Mucosa of descending colon (tissue), 3 donors: ENCODE measurements at regions of chr1 and their contacts with region 1.

Region 1: GRCh38 chr1:109548321-109549267 is at the start of gene GNAI3:
- DNase-seq: peak; percentile 98 to 99 (median 99)
- ATAC-seq: peak; percentile 98
- H3K4me3 ChIP-seq: peak within 1 kb of the TSS; percentile 65
- H3K4me1 ChIP-seq: peaks cover 43% of the 10 kb centered on the region
- CTCF ChIP-seq: no peak
- total RNA-seq, gene GNAI3: 6.5 to 8.3 (median 7.6) TPM

Region 2: GRCh38 chr1:109630081-109630897 is 81.7 kb after region 1 on chr1:
- intact Hi-C with region 1: loop called in 1 of 2 experiments (anchors 10 kb)
- DNase-seq: peak in 1 of 3 donors; percentile 43
- ATAC-seq: no peak
- H3K4me3 ChIP-seq: no peak overlapping the region
- H3K4me1 ChIP-seq: peaks cover 7% of the 10 kb centered on the region
- CTCF ChIP-seq: no peak

Region 3: GRCh38 chr1:109643385-109644230 is 95.0 kb after region 1 on chr1:
- intact Hi-C with region 1: loop called (anchors 5 to 10 kb)
- DNase-seq: peak; percentile 87 to 94 (median 93)
- ATAC-seq: peak; percentile 94
- H3K4me3 ChIP-seq: no peak overlapping the region
- H3K4me1 ChIP-seq: peaks cover 7% of the 10 kb centered on the region
- CTCF ChIP-seq: peak; percentile 85

Region 4: GRCh38 chr1:109762821-109763645 is 214.4 kb after region 1 on chr1:
- intact Hi-C with region 1: loop called in 1 of 2 experiments (anchors 10 kb)
- DNase-seq: peak; percentile 55 to 68 (median 59)
- ATAC-seq: peak; percentile 66
- H3K4me3 ChIP-seq: peak overlapping the region; percentile 55
- H3K4me1 ChIP-seq: peaks cover 32% of the 10 kb centered on the region
- CTCF ChIP-seq: no peak

Region 5: GRCh38 chr1:109984456-109985275 is 436.1 kb after region 1 on chr1 and contains the start of gene AHCYL1:
- intact Hi-C with region 1: loop called in 1 of 2 experiments (anchors 10 kb)
- DNase-seq: peak; percentile 99 to 100 (median 100)
- ATAC-seq: peak; percentile 98
- H3K4me3 ChIP-seq: peak within 1 kb of the TSS; percentile 75
- H3K4me1 ChIP-seq: peaks cover 40% of the 10 kb centered on the region
- CTCF ChIP-seq: peak; percentile 97
- total RNA-seq, gene AHCYL1: 87.5 to 116 (median 87.8) TPM